Activated CD4-positive, alpha-beta T cell treated with anti-CD3 and anti-CD28 coated beads, Interleukin-2, amount 10 ng/mL, durations not matched to agents 7 days and 5 days (primary cell): ENCODE measurements at regions of chr4 and their contacts with region 1.

Region 1: GRCh38 chr4:76293772-76294171 is 12.8 kb upstream of the STBD1 start:
- DNase-seq: no peak
- H3K4me3 Mint-ChIP-seq: no peak overlapping the region
- H3K27ac Mint-ChIP-seq: no peak overlapping the region
- H3K4me1 Mint-ChIP-seq: no peaks in the 10 kb centered on the region
- H3K27me3 Mint-ChIP-seq: peaks cover 18% of the 10 kb centered on the region

Region 2: GRCh38 chr4:76305971-76306881 is 12.5 kb after region 1 on chr4 and contains the start of gene STBD1:
- CTCF ChIA-PET with region 1: interaction called, 11 read pairs
- POLR2A ChIA-PET with region 1: no interaction called
- DNase-seq: peak; percentile 13
- H3K4me3 Mint-ChIP-seq: peak within 1 kb of the TSS; percentile 75
- H3K27ac Mint-ChIP-seq: peak within 1 kb of the TSS; percentile 61
- H3K4me1 Mint-ChIP-seq: peaks cover 42% of the 10 kb centered on the region
- H3K27me3 Mint-ChIP-seq: peaks cover 40% of the 10 kb centered on the region
- total RNA-seq, gene STBD1: 0.77 to 1.2 TPM